Activated CD4-positive, alpha-beta memory T cell treated with anti-CD3 and anti-CD28 coated beads for 36 hours (primary cell): ENCODE measurements at regions of chr9 and their contacts with region 1.

Region 1: DNA sequence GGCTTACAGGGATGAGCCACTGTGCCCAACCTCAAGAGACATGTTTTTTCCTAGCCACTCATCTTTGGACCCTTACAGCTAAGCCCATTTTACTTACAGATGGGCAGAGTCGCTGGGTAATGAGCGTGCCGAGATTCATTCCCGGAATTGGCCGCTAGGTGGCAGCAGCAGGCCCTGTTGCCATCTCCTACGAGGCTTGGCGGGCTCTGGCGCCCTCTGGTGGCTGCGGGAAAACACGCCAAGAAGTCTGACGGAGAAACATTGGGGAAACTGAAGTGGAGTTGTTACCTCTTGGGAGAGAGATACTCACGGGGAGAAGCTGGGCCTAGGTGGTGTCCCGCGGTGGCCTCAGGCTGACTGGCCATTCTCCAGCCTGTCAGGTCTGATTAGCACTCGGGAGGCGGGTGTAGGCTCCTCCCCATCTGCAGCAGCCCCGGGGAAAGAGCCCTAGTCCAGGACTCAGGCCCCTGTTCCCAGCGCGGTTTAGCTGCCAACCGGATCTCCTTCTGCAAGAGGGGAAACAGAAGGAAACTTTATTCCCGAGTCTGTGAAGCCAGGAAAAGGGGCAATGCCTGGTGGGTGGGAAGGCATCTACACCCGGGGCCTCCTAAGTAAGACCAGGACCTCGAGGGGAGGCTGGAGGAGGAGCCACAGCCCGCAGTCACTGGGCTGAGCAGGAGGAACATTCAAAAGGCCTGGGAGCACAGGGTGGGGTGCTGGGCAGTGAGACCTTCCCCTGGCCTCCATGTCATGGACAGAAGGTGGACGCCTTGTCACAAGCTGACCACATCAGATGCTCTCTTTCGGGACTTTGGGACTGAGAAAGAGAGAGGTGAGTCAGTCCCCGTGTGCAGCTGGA is 9.7 kb downstream of the PTGES2 start:
- DNase-seq: peak; percentile 97
- H3K4me3 Mint-ChIP-seq: no peak overlapping the region
- H3K27ac Mint-ChIP-seq: peak overlapping the region; percentile 29
- H3K4me1 Mint-ChIP-seq: peaks cover 8% of the 10 kb centered on the region
- H3K27me3 Mint-ChIP-seq: no peaks in the 10 kb centered on the region

Region 2: DNA sequence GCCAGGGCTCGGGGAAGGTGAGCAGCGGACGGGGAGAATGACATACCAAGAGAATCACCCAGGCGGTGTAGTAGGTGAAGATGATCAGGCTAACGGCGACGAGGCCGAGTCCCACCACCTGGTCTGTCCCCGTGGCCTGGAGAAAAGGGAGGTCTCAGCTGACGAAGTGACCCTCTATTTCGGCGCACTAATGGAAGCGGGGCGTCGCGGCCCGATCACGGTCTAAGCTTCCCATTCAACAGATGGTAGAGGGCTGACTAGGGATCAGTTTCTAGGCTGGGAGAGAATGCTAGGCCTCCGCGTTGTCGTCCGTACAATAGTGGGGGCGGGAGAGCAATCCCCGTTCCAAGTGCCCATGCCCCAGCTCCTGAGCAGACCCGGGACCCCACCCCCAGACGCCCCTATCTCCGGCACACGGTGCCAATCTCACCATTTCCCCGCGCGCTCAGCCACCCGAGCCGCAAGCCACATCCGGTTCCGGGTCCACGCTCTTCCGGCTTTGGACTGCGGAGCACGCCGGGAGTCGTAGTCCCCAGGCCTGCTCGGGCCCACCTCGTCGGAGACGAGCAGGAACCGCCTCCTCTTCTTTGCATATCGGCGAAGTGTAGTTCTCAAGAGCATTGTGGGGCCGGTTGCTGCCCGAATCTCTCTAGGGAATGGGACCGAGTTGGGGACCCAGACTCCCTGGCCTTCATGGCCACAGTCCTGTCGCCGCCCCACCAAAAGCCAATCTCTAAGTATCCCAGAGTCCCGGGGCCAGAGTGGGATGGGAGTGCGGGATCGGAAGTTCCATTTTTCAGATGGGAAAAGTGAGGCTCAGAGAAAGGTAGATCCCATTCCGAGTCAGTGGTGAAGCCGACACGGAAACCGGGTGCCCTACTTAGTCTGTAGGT is 180.2 kb before region 1 on chr9 and contains the start of gene DPM2:
- CTCF ChIA-PET with region 1: interaction called, 31 read pairs
- POLR2A ChIA-PET with region 1: no interaction called
- intact Hi-C with region 1: loop called (anchors 5 kb)
- DNase-seq: peak; percentile 91
- H3K4me3 Mint-ChIP-seq: peak within 1 kb of the TSS; percentile 90
- H3K27ac Mint-ChIP-seq: peak within 1 kb of the TSS; percentile 89
- H3K4me1 Mint-ChIP-seq: peaks cover 43% of the 10 kb centered on the region
- H3K27me3 Mint-ChIP-seq: no peaks in the 10 kb centered on the region
- total RNA-seq, gene DPM2: 41.5 to 42.0 TPM

Region 3: GRCh38 chr9:128067876-128068613 is 49.8 kb before region 1 on chr9 and contains the start of gene SLC25A25:
- CTCF ChIA-PET with region 1: interaction called, 11 read pairs
- POLR2A ChIA-PET with region 1: no interaction called
- intact Hi-C with region 1: loop called (anchors 2 kb)
- DNase-seq: peak; percentile 100
- H3K4me3 Mint-ChIP-seq: peak within 1 kb of the TSS; percentile 96
- H3K27ac Mint-ChIP-seq: peak within 1 kb of the TSS; percentile 91
- H3K4me1 Mint-ChIP-seq: peaks cover 49% of the 10 kb centered on the region
- H3K27me3 Mint-ChIP-seq: no peaks in the 10 kb centered on the region
- total RNA-seq, gene SLC25A25: 17.1 to 17.3 TPM

Region 4: GRCh38 chr9:128094166-128094967 is 23.5 kb before region 1 on chr9:
- CTCF ChIA-PET with region 1: interaction called, 33 read pairs
- POLR2A ChIA-PET with region 1: no interaction called
- intact Hi-C with region 1: no loop called
- DNase-seq: peak; percentile 93
- H3K4me3 Mint-ChIP-seq: peak overlapping the region; percentile 54
- H3K27ac Mint-ChIP-seq: peak overlapping the region; percentile 96
- H3K4me1 Mint-ChIP-seq: peaks cover 84% of the 10 kb centered on the region
- H3K27me3 Mint-ChIP-seq: no peaks in the 10 kb centered on the region

Region 5: GRCh38 chr9:128127990-128128835 is 10.4 kb after region 1 on chr9:
- CTCF ChIA-PET with region 1: interaction called, 48 read pairs
- POLR2A ChIA-PET with region 1: interaction called, 3 read pairs
- intact Hi-C with region 1: loop called (anchors 1 kb)
- DNase-seq: peak; percentile 88
- H3K4me3 Mint-ChIP-seq: peak overlapping the region; percentile 96
- H3K27ac Mint-ChIP-seq: peak overlapping the region; percentile 89
- H3K4me1 Mint-ChIP-seq: peaks cover 28% of the 10 kb centered on the region
- H3K27me3 Mint-ChIP-seq: no peaks in the 10 kb centered on the region

Region 6: DNA sequence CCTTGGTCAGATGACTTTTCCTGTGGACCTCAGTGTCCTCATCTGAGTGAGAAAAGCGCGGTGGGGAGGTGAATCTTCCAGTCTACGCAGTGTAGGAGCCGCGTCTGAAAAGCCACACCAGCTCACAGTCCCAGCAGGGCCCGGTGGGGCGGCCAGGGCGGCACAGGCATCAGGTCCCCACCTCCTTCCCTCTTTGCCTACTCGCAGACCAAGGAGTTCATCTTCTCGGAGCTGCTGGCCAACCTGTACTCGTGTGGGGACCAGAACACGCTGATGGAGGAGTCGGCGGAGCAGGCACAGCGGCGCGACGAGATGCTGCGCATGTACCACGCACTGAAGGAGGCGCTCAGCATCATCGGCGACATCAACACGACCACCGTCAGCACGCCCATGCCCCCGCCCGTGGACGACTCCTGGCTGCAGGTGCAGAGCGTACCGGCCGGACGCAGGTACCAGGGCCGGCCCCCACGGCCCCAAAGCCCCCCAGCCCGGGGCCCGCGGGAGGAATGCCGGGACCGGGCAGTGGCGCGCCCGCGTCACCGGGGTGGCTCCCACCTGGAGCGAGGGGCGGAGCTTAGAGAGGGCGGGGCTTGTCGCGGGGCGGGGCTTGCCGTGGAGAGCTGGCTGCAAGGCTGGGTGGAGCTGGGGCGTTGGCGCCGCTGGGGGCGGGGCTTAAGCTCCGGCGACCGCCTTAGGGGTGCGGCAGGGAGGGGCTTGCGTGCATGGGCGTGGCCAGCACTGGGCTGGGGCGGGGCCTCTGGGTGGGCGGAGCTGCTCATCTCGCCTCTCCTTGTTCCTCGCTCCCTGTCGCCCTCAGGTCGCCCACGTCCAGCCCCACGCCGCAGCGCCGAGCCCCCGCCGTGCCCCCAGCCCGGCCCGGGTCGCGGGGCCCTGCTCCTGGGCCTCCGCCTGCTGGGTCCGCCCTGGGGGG is 132.3 kb after region 1 on chr9:
- CTCF ChIA-PET with region 1: no interaction called
- POLR2A ChIA-PET with region 1: no interaction called
- intact Hi-C with region 1: no loop called
- DNase-seq: peak; percentile 98
- H3K4me3 Mint-ChIP-seq: peak overlapping the region; percentile 78
- H3K27ac Mint-ChIP-seq: no peak overlapping the region
- H3K4me1 Mint-ChIP-seq: peaks cover 12% of the 10 kb centered on the region
- H3K27me3 Mint-ChIP-seq: peaks cover 8% of the 10 kb centered on the region

Region 7: DNA sequence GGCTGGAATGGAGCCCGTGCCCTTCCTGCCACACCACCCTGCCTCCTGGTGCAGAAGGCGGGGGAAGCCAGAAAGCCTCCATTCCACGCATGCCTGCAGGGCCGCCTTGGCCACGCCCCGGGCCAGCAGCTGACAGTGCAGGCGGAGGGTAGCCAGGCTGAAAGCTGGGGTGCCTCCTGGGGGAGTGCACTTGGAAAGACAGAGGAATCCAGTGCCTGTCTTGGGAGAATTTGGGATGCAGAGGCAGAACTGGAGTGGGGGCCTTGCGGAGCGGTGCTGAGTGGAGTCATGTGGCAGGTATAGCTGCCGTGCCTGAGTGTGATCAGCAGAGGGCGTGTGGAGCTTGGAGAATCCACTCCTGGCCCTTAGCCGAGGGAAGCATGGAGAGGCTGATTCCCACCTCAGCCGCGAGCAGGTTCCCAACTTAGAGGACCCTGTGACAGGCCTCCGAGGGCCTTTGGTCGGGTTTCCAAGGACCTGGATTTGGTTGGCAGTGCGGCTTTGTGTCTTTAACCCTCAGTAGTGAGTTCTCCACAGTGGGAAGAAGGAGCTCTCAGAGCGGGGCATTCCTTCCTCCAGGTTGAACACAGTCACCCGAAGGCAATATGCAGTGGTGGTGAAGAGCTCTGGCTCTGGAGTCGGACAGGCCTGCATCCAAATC is 244.3 kb after region 1 on chr9:
- CTCF ChIA-PET with region 1: no interaction called
- POLR2A ChIA-PET with region 1: no interaction called
- intact Hi-C with region 1: no loop called
- DNase-seq: peak; percentile 81
- H3K4me3 Mint-ChIP-seq: peak overlapping the region; percentile 50
- H3K27ac Mint-ChIP-seq: peak overlapping the region; percentile 42
- H3K4me1 Mint-ChIP-seq: peaks cover 9% of the 10 kb centered on the region
- H3K27me3 Mint-ChIP-seq: no peaks in the 10 kb centered on the region

Region 8: GRCh38 chr9:129202613-129203555 is 1085.0 kb after region 1 on chr9:
- CTCF ChIA-PET with region 1: no interaction called
- POLR2A ChIA-PET with region 1: no interaction called
- intact Hi-C with region 1: no loop called
- DNase-seq: peak; percentile 92
- H3K4me3 Mint-ChIP-seq: peak overlapping the region; percentile 64
- H3K27ac Mint-ChIP-seq: no peak overlapping the region
- H3K4me1 Mint-ChIP-seq: peaks cover 11% of the 10 kb centered on the region
- H3K27me3 Mint-ChIP-seq: peaks cover 7% of the 10 kb centered on the region